ENCODE measurements at regions of chr18 and their contacts with region 1.

Region 1: GRCh38 chr18:13003466-13003896 is 12.3 kb downstream of the CEP192 start:
- DNase-seq: peak; percentile 48
- H3K4me3 ChIP-seq: no peak overlapping the region
- H3K27ac ChIP-seq: no peak overlapping the region
- H3K4me1 ChIP-seq: no peaks in the 10 kb centered on the region
- H3K27me3 ChIP-seq: no peaks in the 10 kb centered on the region
- CTCF ChIP-seq: peak; percentile 36 to 50

Region 2: DNA sequence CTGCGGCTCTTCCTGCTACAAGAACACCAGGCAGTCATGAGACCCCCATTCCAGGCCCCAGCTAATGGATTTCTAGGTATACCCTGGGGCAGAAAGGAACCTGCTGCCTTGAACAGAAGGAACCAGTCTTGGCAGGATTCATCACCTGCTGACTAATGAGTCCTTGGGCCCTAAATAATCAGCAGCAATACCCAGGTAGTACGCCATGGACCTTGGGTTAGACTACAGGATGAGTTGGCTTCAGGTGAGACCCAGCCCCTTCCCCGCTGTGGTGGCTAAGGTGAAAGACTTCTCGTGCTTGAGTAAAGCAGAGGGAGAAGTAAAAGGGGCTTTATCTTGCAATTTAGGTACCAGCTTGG is 450.6 kb before region 1 on chr18:
- CTCF ChIA-PET with region 1: no interaction called
- dilution Hi-C with region 1: no loop called
- in situ Hi-C with region 1: no loop called
- intact Hi-C with region 1: no loop called
- DNase-seq: peak; percentile 62
- H3K4me3 ChIP-seq: no peak overlapping the region
- H3K27ac ChIP-seq: no peak overlapping the region
- H3K4me1 ChIP-seq: peaks cover 19% of the 10 kb centered on the region
- H3K27me3 ChIP-seq: no peaks in the 10 kb centered on the region
- CTCF ChIP-seq: no peak

Region 3: GRCh38 chr18:12851716-12852115 is 151.8 kb before region 1 on chr18:
- CTCF ChIA-PET with region 1: no interaction called
- dilution Hi-C with region 1: no loop called
- in situ Hi-C with region 1: no loop called
- intact Hi-C with region 1: no loop called
- DNase-seq: no peak
- H3K4me3 ChIP-seq: no peak overlapping the region
- H3K27ac ChIP-seq: no peak overlapping the region
- H3K4me1 ChIP-seq: no peaks in the 10 kb centered on the region
- H3K27me3 ChIP-seq: no peaks in the 10 kb centered on the region
- CTCF ChIP-seq: no peak

Region 4: GRCh38 chr18:13036622-13037320 is 33.3 kb after region 1 on chr18:
- CTCF ChIA-PET with region 1: no interaction called
- dilution Hi-C with region 1: no loop called
- in situ Hi-C with region 1: no loop called
- intact Hi-C with region 1: no loop called
- DNase-seq: no peak
- H3K4me3 ChIP-seq: no peak overlapping the region
- H3K27ac ChIP-seq: no peak overlapping the region
- H3K4me1 ChIP-seq: no peaks in the 10 kb centered on the region
- H3K27me3 ChIP-seq: no peaks in the 10 kb centered on the region
- CTCF ChIP-seq: no peak

Region 5: DNA sequence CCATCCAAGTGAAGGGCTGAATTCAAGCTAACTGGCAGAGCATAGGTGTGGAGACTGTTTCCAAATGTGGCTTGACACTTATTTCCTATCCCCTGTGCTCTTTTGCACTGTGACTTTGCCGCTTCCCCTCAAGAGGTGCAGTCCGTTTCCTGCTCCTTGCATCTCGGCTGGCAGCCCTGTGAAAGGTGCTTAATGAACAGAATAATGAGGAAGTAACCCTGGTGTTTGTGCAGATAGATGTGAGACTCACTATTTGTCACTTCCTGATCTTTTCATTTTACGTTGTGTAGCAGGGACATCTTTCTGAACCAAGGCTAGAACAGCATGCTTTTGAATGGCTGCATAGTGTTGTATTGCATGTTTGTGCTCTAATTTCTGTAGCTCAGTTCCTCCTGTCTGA is 48.5 kb after region 1 on chr18:
- CTCF ChIA-PET with region 1: no interaction called
- dilution Hi-C with region 1: loop called (anchors 5 kb)
- in situ Hi-C with region 1: no loop called
- intact Hi-C with region 1: no loop called
- DNase-seq: no peak
- H3K4me3 ChIP-seq: no peak overlapping the region
- H3K27ac ChIP-seq: no peak overlapping the region
- H3K4me1 ChIP-seq: no peaks in the 10 kb centered on the region
- H3K27me3 ChIP-seq: no peaks in the 10 kb centered on the region
- CTCF ChIP-seq: no peak

Region 6: GRCh38 chr18:13103366-13103765 is 99.9 kb after region 1 on chr18:
- CTCF ChIA-PET with region 1: no interaction called
- dilution Hi-C with region 1: no loop called
- in situ Hi-C with region 1: no loop called
- intact Hi-C with region 1: loop called (anchors 1 kb)
- DNase-seq: no peak
- H3K4me3 ChIP-seq: no peak overlapping the region
- H3K27ac ChIP-seq: no peak overlapping the region
- H3K4me1 ChIP-seq: no peaks in the 10 kb centered on the region
- H3K27me3 ChIP-seq: no peaks in the 10 kb centered on the region
- CTCF ChIP-seq: peak; percentile 29

Region 7: GRCh38 chr18:13159579-13159978 is 156.1 kb after region 1 on chr18:
- CTCF ChIA-PET with region 1: no interaction called
- dilution Hi-C with region 1: no loop called
- in situ Hi-C with region 1: no loop called
- intact Hi-C with region 1: loop called (anchors 1 kb)
- DNase-seq: peak; percentile 52
- H3K4me3 ChIP-seq: no peak overlapping the region
- H3K27ac ChIP-seq: no peak overlapping the region
- H3K4me1 ChIP-seq: no peaks in the 10 kb centered on the region
- H3K27me3 ChIP-seq: no peaks in the 10 kb centered on the region
- CTCF ChIP-seq: peak; percentile 74 to 79

Measured in mammary epithelial cell (primary cell).